PC-9 (cell line): ENCODE measurements at regions of chr11 and their contacts with region 1.

Region 1: GRCh38 chr11:28529540-28530410 is 421.6 kb downstream of the METTL15 start:
- DNase-seq: no peak
- H3K4me3 ChIP-seq: no peak overlapping the region
- H3K27ac ChIP-seq: no peak overlapping the region
- H3K4me1 ChIP-seq: no peaks in the 10 kb centered on the region
- H3K27me3 ChIP-seq: no peaks in the 10 kb centered on the region
- CTCF ChIP-seq: peak; percentile 76

Region 2: DNA sequence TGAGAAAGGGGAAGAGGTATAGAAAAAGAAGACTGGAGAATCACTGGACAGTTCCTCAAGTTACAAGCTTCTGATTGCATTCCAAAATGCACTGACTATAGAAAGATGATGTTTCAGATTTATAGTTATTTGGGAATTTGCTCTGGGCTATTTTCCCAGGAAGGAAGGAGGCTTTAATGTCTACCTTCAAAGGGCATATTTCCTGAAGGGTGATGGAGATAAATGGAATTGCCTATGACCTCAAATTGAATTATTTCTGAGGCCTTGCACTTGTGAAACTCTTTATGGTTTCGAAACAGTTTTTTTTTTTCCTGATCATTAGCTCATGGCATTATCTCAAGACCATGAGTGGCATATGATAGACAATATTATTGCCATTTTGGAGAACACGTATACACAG is 87.7 kb before region 1 on chr11:
- CTCF ChIA-PET with region 1: no interaction called
- POLR2A ChIA-PET with region 1: no interaction called
- intact Hi-C with region 1: no loop called
- DNase-seq: peak in 1 of 2 experiments; percentile 41
- H3K4me3 ChIP-seq: no peak overlapping the region
- H3K27ac ChIP-seq: no peak overlapping the region
- H3K4me1 ChIP-seq: no peaks in the 10 kb centered on the region
- H3K27me3 ChIP-seq: no peaks in the 10 kb centered on the region
- CTCF ChIP-seq: no peak

Region 3: DNA sequence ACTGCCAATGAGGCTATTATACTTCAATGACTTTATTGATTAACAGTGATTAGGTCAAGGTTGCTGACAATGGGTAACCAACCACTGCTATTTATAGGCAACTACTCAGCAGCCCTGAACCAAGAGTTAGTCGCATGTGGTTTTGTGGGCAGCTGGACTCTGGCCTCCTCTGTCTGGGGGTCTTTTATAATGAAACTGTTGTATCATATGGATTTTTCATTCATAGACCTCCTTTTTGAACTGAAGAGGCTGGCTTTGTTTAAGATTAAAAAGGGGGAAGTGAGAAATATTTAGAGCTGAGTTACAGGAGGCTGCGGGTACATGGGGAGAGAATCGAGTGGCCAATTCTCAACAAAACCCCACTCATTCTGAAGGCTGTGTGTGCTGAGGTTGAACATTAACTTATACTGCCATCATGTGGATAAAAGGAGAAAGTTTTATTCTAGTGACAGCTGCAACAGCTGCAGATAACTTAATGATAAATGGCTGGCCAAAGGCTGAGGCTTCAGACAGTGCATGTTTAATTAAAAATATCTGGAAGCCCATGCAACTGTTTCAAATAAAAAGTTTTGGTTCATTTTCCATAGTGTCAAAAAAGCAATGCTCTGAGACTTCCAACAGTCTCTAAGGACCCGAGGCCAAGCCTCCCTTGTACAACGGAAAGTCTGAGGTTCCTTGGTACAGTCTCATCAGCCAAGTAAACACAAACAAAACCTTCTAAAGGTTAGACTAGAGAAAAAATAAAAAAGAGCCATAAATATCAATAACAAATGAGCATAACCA is 804.4 kb after region 1 on chr11:
- CTCF ChIA-PET with region 1: no interaction called
- POLR2A ChIA-PET with region 1: no interaction called
- intact Hi-C with region 1: loop called (anchors 10 kb)
- DNase-seq: no peak
- H3K4me3 ChIP-seq: no peak overlapping the region
- H3K27ac ChIP-seq: no peak overlapping the region
- H3K4me1 ChIP-seq: no peaks in the 10 kb centered on the region
- H3K27me3 ChIP-seq: peaks cover 4% of the 10 kb centered on the region
- CTCF ChIP-seq: peak; percentile 74

Region 4: GRCh38 chr11:29645373-29645772 is 1115.6 kb after region 1 on chr11:
- CTCF ChIA-PET with region 1: no interaction called
- POLR2A ChIA-PET with region 1: no interaction called
- intact Hi-C with region 1: no loop called
- DNase-seq: no peak
- H3K4me3 ChIP-seq: no peak overlapping the region
- H3K27ac ChIP-seq: no peak overlapping the region
- H3K4me1 ChIP-seq: no peaks in the 10 kb centered on the region
- H3K27me3 ChIP-seq: no peaks in the 10 kb centered on the region
- CTCF ChIP-seq: no peak